ENCODE measurements at regions of chr22 and their contacts with region 1.

Region 1: GRCh38 chr22:36470162-36470993 is 11.1 kb downstream of the TXN2 start:
- DNase-seq: peak; percentile 85 to 87 (median 87)
- H3K4me3 ChIP-seq: no peak overlapping the region
- H3K4me3 Mint-ChIP-seq: no peak overlapping the region
- H3K27ac ChIP-seq: no peak overlapping the region
- H3K27ac Mint-ChIP-seq: peak overlapping the region; percentile 30 to 92 (median 79)
- H3K4me1 ChIP-seq: peaks cover 18% of the 10 kb centered on the region
- H3K4me1 Mint-ChIP-seq: peaks cover 11 to 28% (median 15%) of the 10 kb centered on the region in 4 donors
- H3K27me3 ChIP-seq: no peaks in the 10 kb centered on the region
- H3K27me3 Mint-ChIP-seq: no peaks in the 10 kb centered on the region

Region 2: GRCh38 chr22:35601743-35602630 is 868.4 kb before region 1 on chr22:
- CTCF ChIA-PET with region 1: no interaction called
- POLR2A ChIA-PET with region 1: no interaction called
- intact Hi-C with region 1: no loop called
- DNase-seq: no peak
- H3K4me3 ChIP-seq: no peak overlapping the region
- H3K4me3 Mint-ChIP-seq: no peak overlapping the region
- H3K27ac ChIP-seq: no peak overlapping the region
- H3K27ac Mint-ChIP-seq: peak overlapping the region in 1 of 7 donors; percentile 61
- H3K4me1 ChIP-seq: no peaks in the 10 kb centered on the region
- H3K4me1 Mint-ChIP-seq: no peaks in the 10 kb centered on the region
- H3K27me3 ChIP-seq: no peaks in the 10 kb centered on the region
- H3K27me3 Mint-ChIP-seq: peaks cover 3 to 6% of the 10 kb centered on the region in 2 donors

Region 3: GRCh38 chr22:36311386-36312358 is 158.7 kb before region 1 on chr22:
- CTCF ChIA-PET with region 1: interaction called, 14 read pairs
- POLR2A ChIA-PET with region 1: interaction called, 4 read pairs
- intact Hi-C with region 1: no loop called
- DNase-seq: peak in 1 of 5 donors; percentile 28
- H3K4me3 ChIP-seq: no peak overlapping the region
- H3K4me3 Mint-ChIP-seq: no peak overlapping the region
- H3K27ac ChIP-seq: no peak overlapping the region
- H3K27ac Mint-ChIP-seq: peak overlapping the region in 2 of 7 donors; percentile 24 to 30
- H3K4me1 ChIP-seq: no peaks in the 10 kb centered on the region
- H3K4me1 Mint-ChIP-seq: peaks cover 2 to 13% (median 2%) of the 10 kb centered on the region in 4 donors
- H3K27me3 ChIP-seq: no peaks in the 10 kb centered on the region
- H3K27me3 Mint-ChIP-seq: no peaks in the 10 kb centered on the region

Region 4: GRCh38 chr22:36365020-36365411 is 105.4 kb before region 1 on chr22:
- CTCF ChIA-PET with region 1: interaction called, 19 read pairs
- POLR2A ChIA-PET with region 1: interaction called, 3 read pairs
- intact Hi-C with region 1: no loop called
- DNase-seq: peak; percentile 84 to 98 (median 88)
- H3K4me3 ChIP-seq: no peak overlapping the region
- H3K4me3 Mint-ChIP-seq: peak overlapping the region; percentile 69 to 92 (median 80)
- H3K27ac ChIP-seq: peak overlapping the region; percentile 91
- H3K27ac Mint-ChIP-seq: peak overlapping the region; percentile 92 to 100 (median 97)
- H3K4me1 ChIP-seq: peaks cover 100% of the 10 kb centered on the region
- H3K4me1 Mint-ChIP-seq: peaks cover 73 to 100% (median 88%) of the 10 kb centered on the region in 4 donors
- H3K27me3 ChIP-seq: no peaks in the 10 kb centered on the region
- H3K27me3 Mint-ChIP-seq: no peaks in the 10 kb centered on the region

Region 5: DNA sequence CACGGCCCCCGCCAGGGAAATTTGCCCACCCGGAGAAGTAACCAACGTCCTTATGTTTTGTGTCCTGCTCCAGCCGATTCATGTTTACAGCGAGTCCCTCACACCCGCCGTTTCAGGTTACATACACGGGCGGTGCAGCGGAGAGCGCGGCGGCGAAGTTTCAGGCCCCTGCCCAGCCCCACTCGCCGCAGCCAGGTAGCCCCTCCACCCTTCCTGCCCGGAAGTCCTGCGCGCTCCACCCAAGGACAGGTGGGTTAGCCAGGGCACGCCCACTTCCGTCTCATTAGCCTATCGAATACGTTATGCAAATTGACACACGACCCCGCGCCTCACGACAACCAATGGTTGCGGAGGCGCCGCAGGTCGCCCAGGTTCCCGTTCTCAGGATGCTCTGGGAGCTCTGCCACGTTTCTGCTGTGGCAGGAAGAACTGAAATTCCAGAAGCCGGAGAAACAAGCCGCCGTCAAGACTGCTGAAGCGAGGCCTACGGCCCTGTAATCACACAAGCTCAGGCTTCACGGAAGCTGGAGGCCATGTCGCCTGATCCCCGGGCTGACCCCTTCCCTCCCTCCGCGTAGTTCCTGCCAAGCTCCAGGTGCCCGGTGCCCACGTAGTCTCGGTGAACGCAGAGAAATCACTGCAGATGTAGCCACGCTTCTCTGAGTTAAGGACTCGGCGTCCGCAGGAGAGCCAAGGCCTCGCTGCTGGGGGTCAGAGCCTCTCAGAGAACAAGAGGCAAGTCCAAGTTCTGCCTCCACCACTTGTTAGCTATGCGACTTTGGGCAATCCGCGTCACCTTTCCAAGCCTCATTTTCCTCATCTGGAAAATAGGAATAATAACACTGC is 60.2 kb before region 1 on chr22:
- CTCF ChIA-PET with region 1: interaction called, 54 read pairs
- POLR2A ChIA-PET with region 1: interaction called, 10 read pairs
- intact Hi-C with region 1: loop called (anchors 1 kb)
- DNase-seq: peak; percentile 58 to 80 (median 64)
- H3K4me3 ChIP-seq: peak overlapping the region in 1 of 2 donors; percentile 44
- H3K4me3 Mint-ChIP-seq: peak overlapping the region; percentile 61 to 79 (median 72)
- H3K27ac ChIP-seq: peak overlapping the region; percentile 49
- H3K27ac Mint-ChIP-seq: peak overlapping the region; percentile 86 to 96 (median 91)
- H3K4me1 ChIP-seq: peaks cover 65% of the 10 kb centered on the region
- H3K4me1 Mint-ChIP-seq: peaks cover 35 to 68% (median 52%) of the 10 kb centered on the region in 4 donors
- H3K27me3 ChIP-seq: no peaks in the 10 kb centered on the region
- H3K27me3 Mint-ChIP-seq: no peaks in the 10 kb centered on the region

Region 6: DNA sequence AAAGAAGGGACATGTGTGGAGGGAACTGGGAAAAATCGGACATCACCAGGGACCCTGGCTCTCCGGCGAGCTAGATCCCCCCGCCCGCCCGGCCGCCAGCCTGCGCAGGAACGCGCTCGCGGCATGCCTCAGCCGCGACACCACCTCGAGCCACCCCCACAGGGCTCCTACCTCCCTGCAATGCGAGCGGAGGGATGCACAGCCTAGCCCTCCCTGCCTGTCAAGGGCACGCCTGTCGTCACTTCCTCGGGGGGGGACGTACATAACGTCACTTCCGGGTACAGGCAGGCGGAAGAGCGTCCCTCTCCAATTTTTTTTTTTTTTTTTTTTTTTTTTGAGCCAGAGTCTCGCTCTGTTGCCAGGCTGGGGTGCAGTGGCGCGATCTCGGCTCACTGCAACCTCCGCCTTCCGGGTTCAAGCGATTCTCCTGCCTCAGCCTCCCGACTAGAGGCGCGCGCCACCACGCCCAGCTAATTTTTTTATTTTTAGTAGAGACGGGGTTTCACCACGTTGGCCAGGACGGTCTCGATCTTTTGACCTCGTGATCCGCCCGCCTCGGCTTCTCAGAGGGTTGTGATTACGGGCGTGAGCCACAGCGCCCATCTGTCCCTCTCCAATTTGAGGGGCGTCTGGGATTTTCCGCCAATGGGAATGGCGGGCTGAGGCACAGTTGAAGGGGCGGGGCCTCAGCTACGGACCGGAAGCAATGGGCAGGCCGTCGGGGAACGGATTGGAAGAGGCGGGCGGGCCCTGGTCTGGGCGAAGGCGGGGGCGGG is 11.2 kb after region 1 on chr22 and contains the start of gene TXN2:
- CTCF ChIA-PET with region 1: interaction called, 16 read pairs
- POLR2A ChIA-PET with region 1: interaction called, 9 read pairs
- intact Hi-C with region 1: no loop called
- DNase-seq: peak; percentile 97 to 99 (median 97)
- H3K4me3 ChIP-seq: peak within 1 kb of the TSS; percentile 80 to 86
- H3K4me3 Mint-ChIP-seq: peak within 1 kb of the TSS; percentile 90 to 100 (median 98)
- H3K27ac ChIP-seq: peak within 1 kb of the TSS; percentile 80
- H3K27ac Mint-ChIP-seq: peak within 1 kb of the TSS; percentile 93 to 100 (median 99)
- H3K4me1 ChIP-seq: peaks cover 22% of the 10 kb centered on the region
- H3K4me1 Mint-ChIP-seq: peaks cover 12 to 31% (median 17%) of the 10 kb centered on the region in 4 donors
- H3K27me3 ChIP-seq: no peaks in the 10 kb centered on the region
- H3K27me3 Mint-ChIP-seq: peaks cover 0 to 3% of the 10 kb centered on the region in 2 donors
- total RNA-seq, gene TXN2: 33.5 to 34.5 TPM